Mammary epithelial cell (primary cell): ENCODE measurements at regions of chr17 and their contacts with region 1.

Region 1: GRCh38 chr17:48131216-48131824 is 23.8 kb downstream of the SNX11 start:
- DNase-seq: peak; percentile 46
- H3K4me3 ChIP-seq: no peak overlapping the region
- H3K27ac ChIP-seq: no peak overlapping the region
- H3K4me1 ChIP-seq: peaks cover 18% of the 10 kb centered on the region
- H3K27me3 ChIP-seq: no peaks in the 10 kb centered on the region
- CTCF ChIP-seq: peak; percentile 84 to 87

Region 2: GRCh38 chr17:48047741-48048383 is 83.5 kb before region 1 on chr17 and contains the start of gene NFE2L1:
- CTCF ChIA-PET with region 1: interaction called, 5 read pairs
- dilution Hi-C with region 1: loop called (anchors 5 kb)
- in situ Hi-C with region 1: no loop called
- intact Hi-C with region 1: no loop called
- DNase-seq: peak; percentile 100
- H3K4me3 ChIP-seq: peak within 1 kb of the TSS; percentile 55 to 87 (median 74)
- H3K27ac ChIP-seq: peak within 1 kb of the TSS; percentile 88
- H3K4me1 ChIP-seq: peaks cover 61% of the 10 kb centered on the region
- H3K27me3 ChIP-seq: no peaks in the 10 kb centered on the region
- CTCF ChIP-seq: no peak
- total RNA-seq, gene NFE2L1: 283 to 291 TPM

Region 3: GRCh38 chr17:48074315-48075081 is 56.8 kb before region 1 on chr17:
- CTCF ChIA-PET with region 1: interaction called, 11 read pairs
- dilution Hi-C with region 1: no loop called
- in situ Hi-C with region 1: no loop called
- intact Hi-C with region 1: no loop called
- DNase-seq: peak; percentile 55
- H3K4me3 ChIP-seq: no peak overlapping the region
- H3K27ac ChIP-seq: peak overlapping the region; percentile 46
- H3K4me1 ChIP-seq: peaks cover 7% of the 10 kb centered on the region
- H3K27me3 ChIP-seq: no peaks in the 10 kb centered on the region
- CTCF ChIP-seq: peak; percentile 83 to 85

Region 4: DNA sequence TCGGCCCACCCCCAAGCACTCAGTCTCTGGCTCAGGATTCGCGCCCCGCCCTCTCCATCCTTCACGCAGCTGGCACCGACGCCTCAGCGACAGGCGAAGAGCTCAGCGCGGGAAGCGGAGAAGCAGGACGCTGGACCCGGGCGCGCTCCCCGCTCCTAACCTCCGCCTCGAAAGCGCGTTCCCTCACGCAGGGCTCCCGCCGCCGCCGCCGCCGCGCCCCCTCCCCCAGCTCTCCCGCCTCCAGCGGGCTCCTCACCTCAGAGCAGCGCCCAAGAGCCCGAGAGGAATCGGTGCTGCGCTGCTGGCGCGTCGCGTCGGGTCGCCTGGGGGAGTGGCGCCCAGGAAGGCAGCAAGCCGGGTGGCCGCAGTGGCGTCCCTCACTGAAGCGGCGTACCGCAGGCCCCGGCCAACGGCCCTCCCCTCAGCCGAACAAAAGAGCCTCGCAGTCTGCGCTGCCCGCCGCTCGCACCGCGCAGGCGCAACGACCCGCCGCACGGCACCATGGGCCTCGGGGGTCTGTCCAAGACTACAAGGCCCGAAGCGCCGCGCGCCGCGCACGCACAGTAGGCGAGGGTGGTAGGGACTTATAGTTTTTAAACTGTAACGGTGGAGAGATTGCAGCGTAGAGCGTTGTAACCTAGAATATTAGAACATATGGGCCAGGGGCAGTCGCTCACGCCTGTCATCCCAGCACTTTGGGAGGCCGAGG is 30.2 kb before region 1 on chr17 and contains the start of gene CBX1:
- CTCF ChIA-PET with region 1: interaction called, 3 read pairs
- dilution Hi-C with region 1: no loop called
- in situ Hi-C with region 1: no loop called
- intact Hi-C with region 1: loop called (anchors 2 kb)
- DNase-seq: peak; percentile 92
- H3K4me3 ChIP-seq: peak within 1 kb of the TSS; percentile 87 to 94 (median 93)
- H3K27ac ChIP-seq: peak within 1 kb of the TSS; percentile 78
- H3K4me1 ChIP-seq: peaks cover 6% of the 10 kb centered on the region
- H3K27me3 ChIP-seq: no peaks in the 10 kb centered on the region
- CTCF ChIP-seq: no peak
- total RNA-seq, gene CBX1: 35.0 to 69.2 TPM

Region 5: DNA sequence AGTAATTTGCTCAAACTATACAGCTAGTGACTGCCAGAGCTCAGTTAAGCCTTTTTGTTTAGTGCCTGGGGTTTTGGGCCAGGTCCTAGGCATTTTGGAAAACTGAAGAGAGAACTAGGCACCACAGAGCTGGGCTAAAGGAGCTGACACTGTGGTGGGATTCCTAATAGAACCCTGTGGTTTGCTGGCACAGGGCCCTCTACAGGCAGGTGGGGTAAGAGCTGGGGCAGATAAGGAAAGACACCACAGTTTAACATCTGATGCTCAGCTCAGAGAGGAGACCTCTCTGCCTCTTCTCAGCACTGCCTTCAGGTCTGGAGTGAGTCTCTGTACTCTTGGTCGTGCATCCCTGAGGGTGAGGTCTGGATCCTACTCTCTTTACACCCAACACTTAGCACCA is 97.4 kb after region 1 on chr17:
- CTCF ChIA-PET with region 1: no interaction called
- dilution Hi-C with region 1: loop called (anchors 5 kb)
- in situ Hi-C with region 1: no loop called
- intact Hi-C with region 1: no loop called
- DNase-seq: no peak
- H3K4me3 ChIP-seq: no peak overlapping the region
- H3K27ac ChIP-seq: no peak overlapping the region
- H3K4me1 ChIP-seq: no peaks in the 10 kb centered on the region
- H3K27me3 ChIP-seq: no peaks in the 10 kb centered on the region
- CTCF ChIP-seq: no peak

Region 6: DNA sequence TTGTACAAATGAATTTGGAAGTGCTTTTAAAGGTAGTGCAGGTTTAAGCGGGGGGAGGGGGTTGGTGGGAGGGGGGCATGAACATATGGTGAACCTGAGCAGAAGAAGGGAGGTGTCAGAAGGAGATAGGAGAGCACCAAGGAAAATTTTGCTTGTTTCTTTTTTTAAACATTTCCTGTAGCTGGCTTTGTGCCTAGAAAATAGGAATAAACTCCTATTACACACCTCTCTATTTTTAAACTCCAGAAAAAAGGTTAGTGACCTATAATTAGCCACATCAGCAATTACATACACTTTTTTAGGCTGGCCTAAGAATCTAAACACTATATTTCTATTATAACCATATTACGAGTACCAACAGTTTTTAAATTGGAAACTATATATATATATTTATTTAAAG is 139.6 kb after region 1 on chr17:
- CTCF ChIA-PET with region 1: no interaction called
- dilution Hi-C with region 1: no loop called
- in situ Hi-C with region 1: no loop called
- intact Hi-C with region 1: no loop called
- DNase-seq: no peak
- H3K4me3 ChIP-seq: no peak overlapping the region
- H3K27ac ChIP-seq: no peak overlapping the region
- H3K4me1 ChIP-seq: no peaks in the 10 kb centered on the region
- H3K27me3 ChIP-seq: peaks cover 5% of the 10 kb centered on the region
- CTCF ChIP-seq: no peak